Right cardiac atrium (tissue), 5 donors: ENCODE measurements at regions of chr2 and their contacts with region 1.

Region 1: DNA sequence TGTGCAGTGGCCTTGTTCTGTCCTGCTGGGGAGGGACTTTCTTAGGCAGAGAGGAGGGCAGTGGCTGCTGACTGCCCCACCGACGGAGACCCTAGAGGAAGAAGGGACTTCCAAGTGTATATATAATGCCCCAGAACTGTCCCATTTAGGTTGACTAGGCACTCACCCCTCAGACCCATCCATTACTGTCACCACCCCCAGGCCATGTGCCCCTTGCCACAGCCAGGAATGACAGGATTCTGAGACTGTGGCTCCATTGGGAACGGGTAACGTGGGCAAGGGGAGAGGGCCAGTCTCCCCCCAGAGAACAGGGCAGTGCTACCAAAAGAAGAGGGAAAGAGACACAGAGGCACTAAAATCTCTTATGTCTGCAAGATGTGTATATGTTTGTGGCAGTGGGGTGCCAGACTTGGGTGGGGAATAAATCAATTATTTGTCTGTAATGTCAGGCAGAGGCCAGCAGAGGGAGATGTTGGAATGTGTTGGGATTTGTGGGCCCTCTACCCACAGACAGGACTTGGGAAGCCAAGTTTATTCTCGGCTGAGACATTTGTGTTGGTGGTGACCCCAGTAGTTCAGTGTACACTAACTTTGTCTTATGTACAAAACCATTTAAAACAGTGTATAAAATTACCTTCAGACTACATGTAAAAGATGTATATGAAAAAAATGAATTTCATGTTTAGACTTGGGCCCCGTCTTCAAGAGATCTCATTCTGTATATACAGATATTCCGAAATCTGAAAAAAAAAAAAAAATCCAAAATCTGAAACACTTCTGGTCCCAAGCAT is 24.0 kb upstream of the TMEM37 start:
- DNase-seq: no peak
- ATAC-seq: peak; percentile 64 to 80
- H3K4me3 ChIP-seq: no peak overlapping the region
- H3K27ac ChIP-seq: no peak overlapping the region
- H3K4me1 ChIP-seq: no peaks in the 10 kb centered on the region
- H3K27me3 ChIP-seq: no peaks in the 10 kb centered on the region

Region 2: DNA sequence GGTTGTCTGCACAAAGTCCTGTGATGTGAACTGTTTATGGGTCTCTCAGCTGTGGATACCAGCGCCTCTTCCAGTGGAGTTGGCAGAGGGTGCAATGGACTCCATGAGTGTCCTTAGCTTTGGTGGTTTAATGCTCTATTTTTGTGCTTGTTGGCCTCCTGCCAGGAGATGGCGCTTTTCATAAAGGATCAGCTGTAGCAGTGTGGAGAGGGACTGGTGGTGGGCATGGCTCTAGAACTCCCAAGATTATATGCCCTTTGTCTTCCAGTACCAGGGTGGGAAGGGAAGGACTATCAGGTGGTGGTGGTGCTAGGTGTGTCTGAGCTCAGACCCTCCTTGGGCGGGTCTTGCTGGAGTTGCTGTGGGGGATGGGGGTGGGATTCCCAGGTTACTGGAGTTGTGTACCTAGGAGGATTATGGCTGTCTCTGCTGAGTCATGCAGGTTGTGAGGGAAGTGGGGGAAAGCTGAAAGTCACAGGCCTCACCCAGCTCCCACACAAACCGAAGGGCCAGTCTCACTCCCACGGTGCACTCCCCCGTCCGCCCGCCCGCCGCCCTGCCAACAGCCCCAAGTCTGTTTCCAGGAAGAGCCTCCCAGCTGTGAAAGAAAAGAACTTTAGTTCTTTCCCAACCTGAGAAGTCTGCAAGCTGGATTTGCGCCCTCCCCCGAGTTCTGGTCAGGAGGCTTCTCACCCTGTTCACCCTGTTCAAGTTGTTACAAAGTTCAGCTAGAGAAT is 357.5 kb before region 1 on chr2:
- intact Hi-C with region 1: no loop called
- DNase-seq: peak in 2 of 3 donors; percentile 46 to 51
- ATAC-seq: no peak
- H3K4me3 ChIP-seq: no peak overlapping the region
- H3K27ac ChIP-seq: no peak overlapping the region
- H3K4me1 ChIP-seq: peaks cover 2% of the 10 kb centered on the region
- H3K27me3 ChIP-seq: no peaks in the 10 kb centered on the region

Region 3: GRCh38 chr2:119476301-119477021 is 68.8 kb after region 1 on chr2:
- intact Hi-C with region 1: loop called (anchors 2 kb)
- DNase-seq: peak; percentile 53 to 81 (median 69)
- ATAC-seq: peak; percentile 67 to 76
- H3K4me3 ChIP-seq: no peak overlapping the region
- H3K27ac ChIP-seq: no peak overlapping the region
- H3K4me1 ChIP-seq: no peaks in the 10 kb centered on the region
- H3K27me3 ChIP-seq: no peaks in the 10 kb centered on the region

Region 4: GRCh38 chr2:119659601-119660342 is 252.1 kb after region 1 on chr2:
- intact Hi-C with region 1: loop called in 2 of 4 experiments (anchors 5 to 10 kb)
- DNase-seq: peak in 1 of 3 donors; percentile 22
- ATAC-seq: peak in 1 of 2 donors; percentile 46
- H3K4me3 ChIP-seq: no peak overlapping the region
- H3K27ac ChIP-seq: no peak overlapping the region
- H3K4me1 ChIP-seq: no peaks in the 10 kb centered on the region
- H3K27me3 ChIP-seq: no peaks in the 10 kb centered on the region